GM12878 (cell line): ENCODE measurements at regions of chr7 and their contacts with region 1.

Region 1: GRCh38 chr7:91034459-91035368 is 229.5 kb upstream of the FZD1 start:
- DNase-seq: no peak
- ATAC-seq: peak; percentile 89
- H3K4me3 ChIP-seq: no peak overlapping the region
- H3K27ac ChIP-seq: no peak overlapping the region
- H3K4me1 ChIP-seq: no peaks in the 10 kb centered on the region
- H3K27me3 ChIP-seq: no peaks in the 10 kb centered on the region
- CTCF ChIP-seq: peak; percentile 64 to 78 (median 65)
- EP300 ChIP-seq: no peak
- POLR2A ChIP-seq: no peak
- RAD21 ChIP-seq: peak; percentile 95

Region 2: DNA sequence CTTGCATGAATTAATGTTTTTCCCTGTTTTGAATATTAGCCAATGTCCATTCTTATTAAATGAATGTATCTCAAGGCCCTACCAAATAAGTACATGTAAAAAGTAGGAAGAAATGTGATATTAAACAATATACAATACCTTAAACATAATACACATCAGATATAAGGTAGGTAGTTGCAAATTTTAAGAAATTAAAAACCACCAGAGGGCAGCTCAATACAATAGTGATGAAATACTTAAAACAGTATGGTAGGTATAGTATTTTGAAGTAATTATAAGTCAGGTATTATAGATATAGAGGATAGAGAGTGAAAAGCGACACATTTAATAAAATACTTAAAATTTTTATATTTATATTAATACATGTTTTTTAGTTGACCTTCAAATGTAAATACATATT is 482.2 kb before region 1 on chr7:
- CTCF ChIA-PET with region 1: interaction called, 5 read pairs
- POLR2A ChIA-PET with region 1: no interaction called
- RAD21 ChIA-PET with region 1: interaction called, 3 read pairs
- SMC1A ChIA-PET with region 1: interaction called, 6 read pairs
- in situ Hi-C with region 1: no loop called
- intact Hi-C with region 1: loop called (anchors 5 kb)
- DNase-seq: no peak
- ATAC-seq: peak; percentile 63
- H3K4me3 ChIP-seq: no peak overlapping the region
- H3K27ac ChIP-seq: no peak overlapping the region
- H3K4me1 ChIP-seq: no peaks in the 10 kb centered on the region
- H3K27me3 ChIP-seq: no peaks in the 10 kb centered on the region
- CTCF ChIP-seq: no peak; a peak in 1 of 6 replicates
- EP300 ChIP-seq: no peak
- POLR2A ChIP-seq: no peak
- RAD21 ChIP-seq: peak; percentile 31; the same call in 1 of the 2 replicates

Region 3: GRCh38 chr7:90690159-90690858 is 344.4 kb before region 1 on chr7:
- CTCF ChIA-PET with region 1: interaction called, 10 read pairs
- POLR2A ChIA-PET with region 1: no interaction called
- RAD21 ChIA-PET with region 1: interaction called, 8 read pairs
- SMC1A ChIA-PET with region 1: interaction called, 9 read pairs
- in situ Hi-C with region 1: no loop called
- intact Hi-C with region 1: no loop called
- DNase-seq: no peak
- ATAC-seq: peak; percentile 69
- H3K4me3 ChIP-seq: no peak overlapping the region
- H3K27ac ChIP-seq: no peak overlapping the region
- H3K4me1 ChIP-seq: peaks cover 4% of the 10 kb centered on the region; the same call in 1 of the 2 replicates
- H3K27me3 ChIP-seq: no peaks in the 10 kb centered on the region
- CTCF ChIP-seq: peak in 2 of 3 experiments; percentile 10 to 18; a peak in 2 of 6 replicates
- EP300 ChIP-seq: no peak
- POLR2A ChIP-seq: no peak
- RAD21 ChIP-seq: peak; percentile 73

Region 4: GRCh38 chr7:90749262-90749661 is 285.5 kb before region 1 on chr7:
- CTCF ChIA-PET with region 1: interaction called, 15 read pairs
- POLR2A ChIA-PET with region 1: no interaction called
- RAD21 ChIA-PET with region 1: interaction called, 4 read pairs
- SMC1A ChIA-PET with region 1: interaction called, 10 read pairs
- in situ Hi-C with region 1: no loop called
- intact Hi-C with region 1: no loop called
- DNase-seq: no peak
- ATAC-seq: peak; percentile 22; the same call in 1 of the 3 replicates
- H3K4me3 ChIP-seq: no peak overlapping the region
- H3K27ac ChIP-seq: no peak overlapping the region
- H3K4me1 ChIP-seq: no peaks in the 10 kb centered on the region
- H3K27me3 ChIP-seq: no peaks in the 10 kb centered on the region
- CTCF ChIP-seq: no peak
- EP300 ChIP-seq: no peak
- POLR2A ChIP-seq: no peak
- RAD21 ChIP-seq: no peak

Region 5: GRCh38 chr7:90931986-90932916 is 102.5 kb before region 1 on chr7:
- CTCF ChIA-PET with region 1: interaction called, 63 read pairs
- POLR2A ChIA-PET with region 1: no interaction called
- RAD21 ChIA-PET with region 1: interaction called, 52 read pairs
- SMC1A ChIA-PET with region 1: interaction called, 54 read pairs
- in situ Hi-C with region 1: no loop called
- intact Hi-C with region 1: loop called (anchors 5 kb)
- DNase-seq: peak; percentile 73
- ATAC-seq: peak; percentile 98
- H3K4me3 ChIP-seq: no peak overlapping the region; the same call in none of the 2 replicates
- H3K27ac ChIP-seq: peak overlapping the region; percentile 54
- H3K4me1 ChIP-seq: peaks cover 22% of the 10 kb centered on the region
- H3K27me3 ChIP-seq: no peaks in the 10 kb centered on the region
- CTCF ChIP-seq: peak in 2 of 3 experiments; percentile 5 to 44; a peak in 2 of 6 replicates
- EP300 ChIP-seq: no peak; a peak in 1 of 4 replicates
- POLR2A ChIP-seq: no peak
- RAD21 ChIP-seq: peak; percentile 58

Region 6: GRCh38 chr7:90980545-90980944 is 54.2 kb before region 1 on chr7:
- CTCF ChIA-PET with region 1: no interaction called
- POLR2A ChIA-PET with region 1: no interaction called
- RAD21 ChIA-PET with region 1: no interaction called
- SMC1A ChIA-PET with region 1: no interaction called
- in situ Hi-C with region 1: no loop called
- intact Hi-C with region 1: no loop called
- DNase-seq: no peak
- ATAC-seq: no peak
- H3K4me3 ChIP-seq: no peak overlapping the region
- H3K27ac ChIP-seq: no peak overlapping the region
- H3K4me1 ChIP-seq: no peaks in the 10 kb centered on the region
- H3K27me3 ChIP-seq: no peaks in the 10 kb centered on the region
- CTCF ChIP-seq: no peak
- EP300 ChIP-seq: no peak
- POLR2A ChIP-seq: no peak
- RAD21 ChIP-seq: no peak

Region 7: DNA sequence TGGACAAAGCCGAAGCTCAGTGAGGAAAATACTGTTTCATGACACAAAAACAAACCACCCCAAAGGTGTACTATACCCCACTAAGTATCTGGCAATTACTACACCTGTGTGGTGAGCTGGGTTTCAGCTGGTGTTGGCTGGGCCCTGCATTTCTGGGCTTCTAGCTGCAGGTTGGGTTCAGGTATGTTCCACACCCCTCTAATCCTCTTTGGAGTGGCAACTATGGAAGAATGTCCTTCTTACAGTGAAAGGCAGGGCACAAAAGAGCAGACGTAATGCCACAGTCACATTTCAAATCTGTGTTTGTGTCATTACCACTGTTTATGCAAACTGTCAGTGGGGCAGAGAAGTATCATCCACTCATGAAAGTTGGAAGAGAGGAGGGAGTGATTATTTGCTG is 28.0 kb after region 1 on chr7:
- CTCF ChIA-PET with region 1: no interaction called
- POLR2A ChIA-PET with region 1: no interaction called
- RAD21 ChIA-PET with region 1: no interaction called
- SMC1A ChIA-PET with region 1: no interaction called
- in situ Hi-C with region 1: no loop called
- intact Hi-C with region 1: no loop called
- DNase-seq: no peak
- ATAC-seq: no peak
- H3K4me3 ChIP-seq: no peak overlapping the region
- H3K27ac ChIP-seq: no peak overlapping the region
- H3K4me1 ChIP-seq: no peaks in the 10 kb centered on the region
- H3K27me3 ChIP-seq: no peaks in the 10 kb centered on the region
- CTCF ChIP-seq: no peak
- EP300 ChIP-seq: no peak
- POLR2A ChIP-seq: no peak
- RAD21 ChIP-seq: no peak